ENCODE measurements at regions of chr9 and their contacts with region 1.

Region 1: DNA sequence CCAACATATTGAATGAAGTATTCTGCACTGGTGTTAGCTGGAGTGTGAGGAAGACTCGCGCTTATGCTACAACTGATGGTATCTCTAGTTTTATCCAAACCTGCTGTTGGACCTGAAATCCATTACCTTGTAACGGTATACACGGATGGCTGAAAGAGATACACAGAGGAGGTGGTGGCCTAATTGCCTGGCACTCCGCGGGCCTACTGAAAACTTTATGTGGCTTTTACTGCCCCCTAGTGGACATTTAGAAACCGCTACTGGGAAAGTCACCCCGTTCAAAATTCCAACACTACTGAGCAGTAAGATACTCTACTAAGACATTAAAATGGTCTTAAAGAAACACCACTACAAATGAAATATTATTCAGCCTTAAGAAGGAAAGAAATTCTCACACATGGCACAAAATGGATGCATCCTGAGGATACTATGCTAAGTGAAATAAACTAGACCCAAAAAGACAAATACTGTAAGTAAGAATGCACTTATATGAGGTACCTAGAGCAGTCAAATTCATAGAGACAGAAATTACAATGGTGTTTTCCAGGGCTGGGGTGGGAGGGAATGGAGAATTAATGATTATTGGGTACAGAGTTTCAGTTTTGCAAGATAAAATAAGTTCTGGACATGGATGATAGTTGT is 100.4 kb downstream of the TTLL11 start:
- DNase-seq: no peak
- H3K4me3 ChIP-seq: no peak overlapping the region
- CTCF ChIP-seq: peak; percentile 74

Region 2: GRCh38 chr9:121550569-121551512 is 441.9 kb before region 1 on chr9:
- in situ Hi-C with region 1: loop called (anchors 25 kb)
- DNase-seq: peak; percentile 23
- H3K4me3 ChIP-seq: peak overlapping the region; percentile 10
- CTCF ChIP-seq: peak; percentile 80

Region 3: GRCh38 chr9:121686930-121687541 is 305.7 kb before region 1 on chr9:
- in situ Hi-C with region 1: loop called (anchors 25 kb)
- DNase-seq: peak; percentile 38
- H3K4me3 ChIP-seq: no peak overlapping the region
- CTCF ChIP-seq: peak; percentile 95

Measured in astrocyte of the cerebellum (primary cell).